Activated T-helper 1 cell treated with anti-CD3 and anti-CD28 coated beads, Interleukin-12 subunit alpha, Interleukin-12 subunit beta, Interleukin-2, Interleukin-4 antibody, amounts not matched to agents 30 ng/mL and 10 ng/mL and 1 ng/mL, durations not matched to agents 14 hours and 24 hours and 36 hours (primary cell): ENCODE measurements at regions of chrX and their contacts with region 1.

Region 1: GRCh38 chrX:71111141-71111843 is at the start of gene IL2RG:
- DNase-seq: peak; percentile 75
- H3K4me3 Mint-ChIP-seq: peak within 1 kb of the TSS; percentile 99
- H3K27ac Mint-ChIP-seq: peak within 1 kb of the TSS; percentile 92
- H3K4me1 Mint-ChIP-seq: peaks cover 52% of the 10 kb centered on the region
- H3K27me3 Mint-ChIP-seq: no peaks in the 10 kb centered on the region
- total RNA-seq, gene IL2RG: 375 and 397 TPM in 2 replicates

Region 2: GRCh38 chrX:71095543-71095911 is 15.8 kb before region 1 on chrX and contains the start of gene FOXO4:
- intact Hi-C with region 1: loop called (anchors 2 kb)
- DNase-seq: peak; percentile 81
- H3K4me3 Mint-ChIP-seq: peak within 1 kb of the TSS; percentile 93
- H3K27ac Mint-ChIP-seq: peak within 1 kb of the TSS; percentile 91
- H3K4me1 Mint-ChIP-seq: peaks cover 33% of the 10 kb centered on the region
- H3K27me3 Mint-ChIP-seq: peaks cover 8% of the 10 kb centered on the region
- total RNA-seq, gene FOXO4: 10.7 and 11.9 TPM in 2 replicates

Region 3: DNA sequence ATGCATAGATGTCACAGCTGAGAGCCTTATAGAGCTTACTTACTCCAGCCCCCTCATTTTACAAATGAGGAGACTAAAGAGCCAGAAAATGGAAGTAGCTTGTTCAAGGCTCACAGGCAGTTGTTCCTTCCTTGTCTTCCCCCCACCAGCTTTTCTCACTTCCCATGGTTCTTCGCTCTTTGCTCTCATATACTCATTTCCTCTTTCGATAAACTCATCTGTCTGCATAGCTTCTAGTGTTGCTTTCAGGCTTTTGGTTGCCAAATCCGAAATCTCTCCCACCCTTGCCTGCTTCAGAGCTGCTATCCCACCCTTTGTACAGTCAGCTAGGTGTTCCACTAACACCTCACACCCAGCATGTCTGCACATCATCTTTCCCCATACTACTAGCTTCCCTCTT is 86.8 kb after region 1 on chrX:
- intact Hi-C with region 1: loop called (anchors 5 kb)
- DNase-seq: no peak
- H3K4me3 Mint-ChIP-seq: peak overlapping the region; percentile 94
- H3K27ac Mint-ChIP-seq: peak overlapping the region; percentile 92
- H3K4me1 Mint-ChIP-seq: peaks cover 21% of the 10 kb centered on the region
- H3K27me3 Mint-ChIP-seq: no peaks in the 10 kb centered on the region

Region 4: GRCh38 chrX:71227370-71228062 is 116.2 kb after region 1 on chrX:
- intact Hi-C with region 1: no loop called
- DNase-seq: no peak
- H3K4me3 Mint-ChIP-seq: no peak overlapping the region
- H3K27ac Mint-ChIP-seq: no peak overlapping the region
- H3K4me1 Mint-ChIP-seq: no peaks in the 10 kb centered on the region
- H3K27me3 Mint-ChIP-seq: peaks cover 3% of the 10 kb centered on the region

Region 5: GRCh38 chrX:71541210-71542022 is 430.1 kb after region 1 on chrX:
- intact Hi-C with region 1: loop called (anchors 5 kb)
- DNase-seq: no peak
- H3K4me3 Mint-ChIP-seq: peak overlapping the region; percentile 95
- H3K27ac Mint-ChIP-seq: peak overlapping the region; percentile 94
- H3K4me1 Mint-ChIP-seq: peaks cover 61% of the 10 kb centered on the region
- H3K27me3 Mint-ChIP-seq: no peaks in the 10 kb centered on the region